ENCODE measurements at regions of chr1 and their contacts with region 1.

Region 1: DNA sequence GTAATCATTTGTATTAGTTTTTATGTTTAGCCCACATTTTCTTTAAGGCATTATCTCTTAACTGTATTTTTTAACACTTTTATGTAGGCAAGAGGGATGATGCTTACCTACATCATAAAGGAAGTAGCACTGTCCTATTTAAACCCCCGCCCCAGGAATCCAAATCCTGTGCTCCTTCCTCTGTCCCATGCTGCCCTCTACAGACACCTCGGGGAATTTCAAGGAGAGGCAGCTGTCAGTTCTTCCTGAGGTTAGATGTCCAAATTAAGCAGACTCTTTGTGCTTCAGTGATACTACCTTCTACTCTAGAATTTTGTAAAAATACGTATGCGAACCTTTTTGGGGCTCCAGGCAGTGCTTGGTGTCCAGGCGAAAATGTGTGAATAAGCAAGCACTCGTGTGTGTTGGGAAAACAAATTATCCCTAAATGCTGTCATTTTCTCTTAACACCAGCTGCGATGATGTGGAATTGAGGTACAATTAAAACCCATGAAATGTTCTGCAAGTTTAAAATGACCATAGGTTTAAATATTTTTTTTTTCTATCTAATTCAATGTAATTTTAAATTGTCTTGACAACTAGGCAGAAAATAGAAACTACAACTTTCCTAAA is 19.2 kb downstream of the CRCT1 start:
- DNase-seq: peak; percentile 43
- CTCF ChIP-seq: peak; percentile 78

Region 2: GRCh38 chr1:152182431-152182830 is 351.0 kb before region 1 on chr1:
- CTCF ChIA-PET with region 1: no interaction called
- POLR2A ChIA-PET with region 1: no interaction called
- DNase-seq: no peak
- CTCF ChIP-seq: peak; percentile 46

Region 3: GRCh38 chr1:152517237-152517811 is 16.1 kb before region 1 on chr1:
- CTCF ChIA-PET with region 1: interaction called, 11 read pairs
- POLR2A ChIA-PET with region 1: no interaction called
- DNase-seq: no peak
- CTCF ChIP-seq: no peak

Measured in GM10248 (cell line).